ENCODE measurements at regions of chr17 and their contacts with region 1.

Region 1: GRCh38 chr17:49290690-49291359 is 60.2 kb upstream of the PHOSPHO1 start:
- DNase-seq: no peak
- ATAC-seq: no peak
- H3K4me3 ChIP-seq: no peak overlapping the region
- H3K27ac ChIP-seq: no peak overlapping the region
- H3K4me1 ChIP-seq: no peaks in the 10 kb centered on the region
- H3K27me3 ChIP-seq: no peaks in the 10 kb centered on the region

Region 2: DNA sequence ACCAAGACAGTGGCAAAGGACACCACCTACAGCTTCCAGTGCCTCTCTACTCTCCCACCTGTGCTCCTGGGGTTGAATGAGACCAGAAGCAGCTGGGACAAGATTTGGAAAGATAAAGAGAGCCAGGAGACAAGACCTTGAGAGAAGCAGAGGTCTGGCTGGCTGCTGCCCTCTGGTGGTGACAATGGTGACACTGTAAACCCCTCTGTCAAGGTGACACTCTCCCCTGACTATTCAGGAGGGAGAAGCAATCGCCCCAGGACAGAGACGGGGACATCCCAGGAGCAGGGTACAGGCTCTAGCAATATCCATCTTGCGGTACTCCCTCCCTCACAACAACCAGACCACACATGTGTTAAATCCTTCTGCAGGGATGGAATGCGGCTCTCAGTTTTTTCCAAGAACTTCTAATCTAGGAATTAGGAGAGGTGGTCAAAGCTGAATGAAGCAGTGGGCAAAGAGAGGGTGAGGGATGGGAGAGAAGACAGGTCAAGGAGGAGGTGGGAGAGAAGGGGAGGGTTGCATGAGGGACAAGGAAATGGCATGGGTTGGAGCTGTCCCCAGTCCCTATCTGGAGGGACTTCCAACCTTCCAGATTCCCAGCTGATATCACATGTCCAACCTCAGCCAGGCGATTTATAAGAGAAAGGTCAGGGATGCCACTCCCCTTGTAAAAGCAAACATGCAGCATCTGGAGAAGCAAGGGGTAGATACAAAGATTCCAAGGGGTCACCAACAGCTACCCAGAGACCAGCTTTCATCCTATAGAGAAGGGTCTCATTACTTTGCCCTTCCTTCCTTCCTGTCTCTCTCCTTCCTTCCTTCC is 63.2 kb before region 1 on chr17:
- intact Hi-C with region 1: loop called in 1 of 2 experiments (anchors 5 kb)
- DNase-seq: peak; percentile 84 to 90
- ATAC-seq: no peak
- H3K4me3 ChIP-seq: no peak overlapping the region
- H3K27ac ChIP-seq: no peak overlapping the region
- H3K4me1 ChIP-seq: no peaks in the 10 kb centered on the region
- H3K27me3 ChIP-seq: no peaks in the 10 kb centered on the region

Measured in aorta (tissue), 5 donors.